ENCODE measurements at regions of chr4 and their contacts with region 1.

Region 1: GRCh38 chr4:82123934-82124333 is 249.9 kb downstream of the HNRNPD start:
- DNase-seq: peak in 4 of 5 donors; percentile 14 to 37 (median 32)
- H3K4me3 ChIP-seq: no peak overlapping the region
- H3K4me3 Mint-ChIP-seq: no peak overlapping the region
- H3K27ac ChIP-seq: no peak overlapping the region
- H3K27ac Mint-ChIP-seq: peak overlapping the region in 1 of 7 donors; percentile 32
- H3K4me1 ChIP-seq: no peaks in the 10 kb centered on the region
- H3K4me1 Mint-ChIP-seq: peaks cover 4 to 13% (median 6%) of the 10 kb centered on the region in 4 donors
- H3K27me3 ChIP-seq: no peaks in the 10 kb centered on the region
- H3K27me3 Mint-ChIP-seq: peaks cover 0 to 2% of the 10 kb centered on the region in 2 donors

Region 2: DNA sequence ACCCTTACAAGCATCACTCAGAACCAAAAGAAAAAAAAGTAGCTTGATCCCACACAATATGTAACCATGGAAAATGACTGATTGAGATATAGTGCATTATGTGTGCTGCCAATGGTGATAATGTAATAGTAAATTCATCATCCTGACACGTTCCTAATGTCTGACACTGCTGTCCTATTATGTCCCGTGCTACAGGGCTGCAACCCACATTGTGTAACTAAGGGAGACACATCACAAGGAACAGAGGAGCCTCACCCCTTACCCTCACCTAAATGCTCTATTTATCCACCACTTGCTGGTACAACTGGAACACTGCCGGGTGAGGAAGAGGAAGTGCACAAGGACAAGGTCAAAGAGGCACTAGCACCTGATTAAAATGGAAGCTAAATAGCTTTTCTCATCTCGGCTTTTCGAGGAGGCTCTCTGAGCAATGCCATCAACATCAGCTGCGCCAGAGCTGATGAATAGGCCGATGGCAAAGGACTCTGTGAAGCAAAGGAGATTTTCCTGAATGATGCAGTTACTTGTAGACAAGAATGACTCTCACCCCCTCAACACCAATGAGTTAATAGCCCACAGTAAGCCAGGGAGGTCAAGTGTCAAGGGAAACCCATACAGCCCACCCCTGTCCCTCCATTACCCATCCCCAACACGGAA is 68.2 kb after region 1 on chr4:
- CTCF ChIA-PET with region 1: interaction called, 11 read pairs
- POLR2A ChIA-PET with region 1: no interaction called
- intact Hi-C with region 1: no loop called
- DNase-seq: no peak
- H3K4me3 ChIP-seq: no peak overlapping the region
- H3K4me3 Mint-ChIP-seq: no peak overlapping the region
- H3K27ac ChIP-seq: no peak overlapping the region
- H3K27ac Mint-ChIP-seq: no peak overlapping the region
- H3K4me1 ChIP-seq: no peaks in the 10 kb centered on the region
- H3K4me1 Mint-ChIP-seq: peaks cover 0 to 12% (median under 1%) of the 10 kb centered on the region in 4 donors
- H3K27me3 ChIP-seq: no peaks in the 10 kb centered on the region
- H3K27me3 Mint-ChIP-seq: no peaks in the 10 kb centered on the region

Region 3: GRCh38 chr4:82201805-82202641 is 78.1 kb after region 1 on chr4:
- CTCF ChIA-PET with region 1: interaction called, 40 read pairs
- POLR2A ChIA-PET with region 1: no interaction called
- intact Hi-C with region 1: loop called (anchors 1 kb)
- DNase-seq: peak; percentile 39 to 52 (median 49)
- H3K4me3 ChIP-seq: no peak overlapping the region
- H3K4me3 Mint-ChIP-seq: no peak overlapping the region
- H3K27ac ChIP-seq: no peak overlapping the region
- H3K27ac Mint-ChIP-seq: no peak overlapping the region
- H3K4me1 ChIP-seq: no peaks in the 10 kb centered on the region
- H3K4me1 Mint-ChIP-seq: peaks cover 0 to 10% (median 3%) of the 10 kb centered on the region in 4 donors
- H3K27me3 ChIP-seq: no peaks in the 10 kb centered on the region
- H3K27me3 Mint-ChIP-seq: peaks cover 5 to 6% of the 10 kb centered on the region in 2 donors

Region 4: DNA sequence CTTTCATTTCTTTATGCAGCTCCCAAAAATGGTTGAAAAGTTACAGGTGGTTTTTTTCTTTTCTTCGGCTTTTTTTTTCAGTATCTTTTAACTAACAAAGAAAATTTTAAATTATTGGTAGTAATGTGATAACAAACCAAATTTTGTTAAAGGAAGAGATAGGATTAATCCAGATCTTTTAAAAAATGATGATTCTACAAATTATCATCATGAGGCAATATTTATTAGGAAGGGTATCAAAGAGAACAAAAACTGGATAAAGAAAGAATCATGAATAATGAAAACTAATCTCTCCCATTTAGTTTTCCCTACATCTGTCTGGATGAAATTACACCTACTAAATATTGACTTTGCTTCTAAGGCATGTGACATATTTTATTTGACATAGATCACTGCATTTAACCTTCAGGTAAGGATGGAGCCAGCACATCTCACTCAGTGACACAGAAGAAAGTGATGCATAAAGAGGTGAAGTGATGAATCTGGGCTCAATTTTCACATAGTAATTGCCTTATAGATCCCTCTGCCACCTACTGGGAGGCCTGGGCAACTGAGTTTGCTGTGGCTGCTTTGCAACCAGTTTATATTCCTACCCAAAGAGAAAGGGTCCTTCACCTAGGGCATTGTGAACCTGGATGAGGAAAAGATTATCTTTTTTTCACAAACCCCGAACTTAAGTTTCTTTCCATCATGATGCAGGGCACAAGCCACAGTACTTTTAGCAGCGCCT is 94.2 kb after region 1 on chr4:
- CTCF ChIA-PET with region 1: interaction called, 10 read pairs
- POLR2A ChIA-PET with region 1: no interaction called
- intact Hi-C with region 1: loop called (anchors 1 kb)
- DNase-seq: peak in 4 of 5 donors; percentile 10 to 22 (median 17)
- H3K4me3 ChIP-seq: no peak overlapping the region
- H3K4me3 Mint-ChIP-seq: no peak overlapping the region
- H3K27ac ChIP-seq: no peak overlapping the region
- H3K27ac Mint-ChIP-seq: peak overlapping the region in 1 of 7 donors; percentile 32
- H3K4me1 ChIP-seq: peaks cover 15% of the 10 kb centered on the region
- H3K4me1 Mint-ChIP-seq: peaks cover 13 to 24% (median 15%) of the 10 kb centered on the region in 4 donors
- H3K27me3 ChIP-seq: no peaks in the 10 kb centered on the region
- H3K27me3 Mint-ChIP-seq: no peaks in the 10 kb centered on the region

Region 5: GRCh38 chr4:82360298-82361177 is 236.6 kb after region 1 on chr4:
- CTCF ChIA-PET with region 1: interaction called, 4 read pairs
- POLR2A ChIA-PET with region 1: no interaction called
- intact Hi-C with region 1: loop called (anchors 5 kb)
- DNase-seq: peak in 4 of 5 donors; percentile 39 to 42 (median 40)
- H3K4me3 ChIP-seq: no peak overlapping the region
- H3K4me3 Mint-ChIP-seq: peak overlapping the region in 5 of 8 donors; percentile 3 to 54 (median 17)
- H3K27ac ChIP-seq: peak overlapping the region; percentile 22
- H3K27ac Mint-ChIP-seq: peak overlapping the region; percentile 30 to 88 (median 62)
- H3K4me1 ChIP-seq: peaks cover 98% of the 10 kb centered on the region
- H3K4me1 Mint-ChIP-seq: peaks cover 59 to 94% (median 77%) of the 10 kb centered on the region in 4 donors
- H3K27me3 ChIP-seq: no peaks in the 10 kb centered on the region
- H3K27me3 Mint-ChIP-seq: no peaks in the 10 kb centered on the region

Measured in CD4-positive, alpha-beta memory T cell (primary cell).